ENCODE measurements at regions of chr4 and their contacts with region 1.

Region 1: GRCh38 chr4:70993181-70994068 is at the start of gene DCK:
- DNase-seq: peak; percentile 89
- ATAC-seq: peak; percentile 94
- H3K4me3 Mint-ChIP-seq: peak within 1 kb of the TSS; percentile 92
- H3K27ac Mint-ChIP-seq: peak within 1 kb of the TSS; percentile 81
- H3K4me1 Mint-ChIP-seq: peaks cover 37% of the 10 kb centered on the region
- H3K27me3 Mint-ChIP-seq: no peaks in the 10 kb centered on the region
- total RNA-seq, gene DCK: 60.0 to 70.7 TPM

Region 2: GRCh38 chr4:71009890-71010588 is 16.6 kb after region 1 on chr4:
- CTCF ChIA-PET with region 1: interaction called, 113 read pairs
- DNase-seq: no peak
- ATAC-seq: peak; percentile 58
- H3K4me3 Mint-ChIP-seq: no peak overlapping the region
- H3K27ac Mint-ChIP-seq: peak overlapping the region; percentile 35
- H3K4me1 Mint-ChIP-seq: peaks cover 36% of the 10 kb centered on the region
- H3K27me3 Mint-ChIP-seq: no peaks in the 10 kb centered on the region

Region 3: GRCh38 chr4:71141125-71141524 is 147.7 kb after region 1 on chr4:
- CTCF ChIA-PET with region 1: no interaction called
- DNase-seq: no peak
- ATAC-seq: no peak
- H3K4me3 Mint-ChIP-seq: no peak overlapping the region
- H3K27ac Mint-ChIP-seq: no peak overlapping the region
- H3K4me1 Mint-ChIP-seq: peaks cover 5% of the 10 kb centered on the region
- H3K27me3 Mint-ChIP-seq: no peaks in the 10 kb centered on the region